Naive thymus-derived CD4-positive, alpha-beta T cell (primary cell): ENCODE measurements at regions of chr11 and their contacts with region 1.

Region 1: GRCh38 chr11:80758787-80759186 is 1318.0 kb upstream of the TENM4 start:
- DNase-seq: no peak
- ATAC-seq: no peak
- H3K4me3 ChIP-seq: no peak overlapping the region
- H3K4me3 Mint-ChIP-seq: no peak overlapping the region
- H3K27ac ChIP-seq: no peak overlapping the region
- H3K27ac Mint-ChIP-seq: no peak overlapping the region
- H3K4me1 ChIP-seq: no peaks in the 10 kb centered on the region
- H3K4me1 Mint-ChIP-seq: no peaks in the 10 kb centered on the region
- H3K27me3 ChIP-seq: no peaks in the 10 kb centered on the region
- H3K27me3 Mint-ChIP-seq: no peaks in the 10 kb centered on the region

Region 2: GRCh38 chr11:80815752-80816453 is 57.1 kb after region 1 on chr11:
- CTCF ChIA-PET with region 1: no interaction called
- POLR2A ChIA-PET with region 1: no interaction called
- intact Hi-C with region 1: loop called in 1 of 2 experiments (anchors 10 kb)
- DNase-seq: no peak
- ATAC-seq: no peak
- H3K4me3 ChIP-seq: no peak overlapping the region
- H3K4me3 Mint-ChIP-seq: no peak overlapping the region
- H3K27ac ChIP-seq: no peak overlapping the region
- H3K27ac Mint-ChIP-seq: no peak overlapping the region
- H3K4me1 ChIP-seq: no peaks in the 10 kb centered on the region
- H3K4me1 Mint-ChIP-seq: peaks cover 0 to 6% (median 0%) of the 10 kb centered on the region in 7 donors
- H3K27me3 ChIP-seq: no peaks in the 10 kb centered on the region
- H3K27me3 Mint-ChIP-seq: no peaks in the 10 kb centered on the region